ENCODE measurements at regions of chr7 and their contacts with region 1.

Region 1: DNA sequence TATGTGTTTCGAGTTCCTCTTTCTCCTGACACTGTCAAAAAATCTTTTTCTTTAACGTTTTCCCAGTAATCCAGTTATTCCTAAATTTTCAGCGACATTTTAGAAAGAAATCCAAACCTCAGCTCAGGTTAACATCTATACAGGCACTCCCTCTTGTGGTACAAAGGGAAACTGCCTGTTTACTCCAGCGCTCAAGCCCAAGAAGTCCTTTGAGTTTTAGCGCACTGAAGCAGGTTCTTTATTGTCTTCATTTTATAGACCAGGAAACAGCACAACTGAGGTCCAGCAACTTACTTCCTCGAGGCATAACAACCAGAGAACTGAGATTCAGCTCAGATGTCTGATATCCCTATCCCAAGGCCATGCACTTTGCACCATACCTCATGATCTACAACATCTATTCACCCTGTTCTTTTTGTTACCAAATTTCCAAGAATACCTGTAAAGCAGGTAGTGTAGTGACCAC is 287.2 kb upstream of the MKLN1 start:
- DNase-seq: no peak
- ATAC-seq: peak; percentile 75
- H3K4me3 Mint-ChIP-seq: peak overlapping the region; percentile 60
- H3K27ac Mint-ChIP-seq: peak overlapping the region; percentile 81
- H3K4me1 Mint-ChIP-seq: peaks cover 56% of the 10 kb centered on the region
- H3K27me3 Mint-ChIP-seq: no peaks in the 10 kb centered on the region
- CTCF ChIP-seq: peak; percentile 61

Region 2: DNA sequence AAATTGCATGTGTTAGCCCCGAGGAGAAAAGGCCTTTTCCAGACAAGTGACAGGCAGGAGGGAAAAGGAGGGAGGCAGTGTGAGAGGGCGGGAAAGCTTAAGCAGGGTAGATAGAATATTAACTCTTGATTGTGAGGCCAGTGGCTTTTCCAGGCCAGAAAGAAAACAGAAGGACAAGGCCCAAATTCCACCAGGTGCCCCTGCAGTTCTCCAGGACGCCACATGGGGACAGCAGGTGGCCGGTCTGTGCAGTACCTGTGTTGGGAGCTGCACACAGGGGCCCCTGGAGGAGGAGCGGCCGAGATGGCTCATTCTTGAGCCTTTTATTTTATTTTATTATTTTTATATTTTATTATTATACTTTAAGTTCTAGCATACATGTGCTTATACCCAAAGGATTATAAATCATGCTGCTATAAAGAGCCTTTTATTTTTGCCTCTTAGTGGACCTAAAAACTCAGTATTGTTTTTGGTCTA is 165.2 kb before region 1 on chr7:
- CTCF ChIA-PET with region 1: interaction called, 6 read pairs
- POLR2A ChIA-PET with region 1: no interaction called
- intact Hi-C with region 1: loop called (anchors 1 kb)
- DNase-seq: no peak
- ATAC-seq: peak; percentile 81
- H3K4me3 Mint-ChIP-seq: no peak overlapping the region
- H3K27ac Mint-ChIP-seq: no peak overlapping the region
- H3K4me1 Mint-ChIP-seq: peaks cover 24% of the 10 kb centered on the region
- H3K27me3 Mint-ChIP-seq: no peaks in the 10 kb centered on the region
- CTCF ChIP-seq: no peak

Region 3: DNA sequence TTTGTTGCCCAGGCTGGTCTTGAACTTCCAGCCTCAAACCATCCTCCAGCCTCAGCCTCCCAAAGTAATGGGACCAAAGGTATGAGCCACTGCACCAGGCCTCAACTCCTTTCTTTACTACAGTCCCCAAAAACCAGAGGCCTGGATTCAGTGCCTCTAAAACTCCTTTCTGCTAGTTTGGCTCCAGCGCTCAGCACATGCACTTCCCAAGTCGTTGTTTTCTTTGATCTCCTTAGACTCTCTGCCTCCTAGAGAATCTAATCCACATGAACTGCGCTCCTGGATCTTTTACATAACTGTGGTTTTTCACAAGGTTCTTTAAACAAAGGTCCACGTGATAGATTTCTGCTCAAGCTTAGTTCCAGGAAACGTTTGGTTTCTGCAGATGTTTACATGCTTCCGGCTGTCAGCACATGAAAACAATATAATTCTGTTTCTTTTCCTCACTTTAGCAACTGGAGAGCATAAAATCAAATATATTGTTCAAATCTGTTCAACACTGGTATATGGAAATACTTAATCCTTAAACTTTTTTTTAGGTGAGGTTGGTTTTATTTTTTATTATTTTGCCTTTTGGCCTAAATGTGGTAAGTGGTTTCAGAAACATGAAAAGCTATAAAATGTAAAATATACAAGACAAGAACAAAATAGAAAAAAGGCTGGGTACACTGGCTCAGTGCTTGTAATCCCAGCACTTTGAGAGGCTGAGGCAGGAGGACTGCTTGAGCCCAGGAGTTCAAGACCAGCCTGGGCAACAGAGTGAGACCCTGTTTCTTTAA is 16.7 kb after region 1 on chr7:
- CTCF ChIA-PET with region 1: interaction called, 13 read pairs
- POLR2A ChIA-PET with region 1: interaction called, 8 read pairs
- intact Hi-C with region 1: no loop called
- DNase-seq: no peak
- ATAC-seq: peak; percentile 59
- H3K4me3 Mint-ChIP-seq: peak overlapping the region; percentile 76
- H3K27ac Mint-ChIP-seq: peak overlapping the region; percentile 97
- H3K4me1 Mint-ChIP-seq: peaks cover 79% of the 10 kb centered on the region
- H3K27me3 Mint-ChIP-seq: no peaks in the 10 kb centered on the region
- CTCF ChIP-seq: no peak